CD4-positive, alpha-beta T cell (primary cell): ENCODE measurements at regions of chr15 and their contacts with region 1.

Region 1: GRCh38 chr15:80989518-80990478 is at the start of gene MESD:
- DNase-seq: peak; percentile 93 to 99 (median 98)
- ATAC-seq: peak; percentile 99
- H3K4me3 ChIP-seq: peak within 1 kb of the TSS; percentile 92
- H3K4me3 Mint-ChIP-seq: peak within 1 kb of the TSS; percentile 95
- H3K27ac ChIP-seq: peak within 1 kb of the TSS; percentile 79 to 83
- H3K27ac Mint-ChIP-seq: peak within 1 kb of the TSS; percentile 94
- H3K4me1 ChIP-seq: peaks cover 42% of the 10 kb centered on the region
- H3K4me1 Mint-ChIP-seq: peaks cover 68% of the 10 kb centered on the region
- H3K27me3 ChIP-seq: no peaks in the 10 kb centered on the region
- H3K27me3 Mint-ChIP-seq: no peaks in the 10 kb centered on the region
- CTCF ChIP-seq: no peak
- total RNA-seq, gene MESD: 8.4 to 10.2 TPM

Region 2: DNA sequence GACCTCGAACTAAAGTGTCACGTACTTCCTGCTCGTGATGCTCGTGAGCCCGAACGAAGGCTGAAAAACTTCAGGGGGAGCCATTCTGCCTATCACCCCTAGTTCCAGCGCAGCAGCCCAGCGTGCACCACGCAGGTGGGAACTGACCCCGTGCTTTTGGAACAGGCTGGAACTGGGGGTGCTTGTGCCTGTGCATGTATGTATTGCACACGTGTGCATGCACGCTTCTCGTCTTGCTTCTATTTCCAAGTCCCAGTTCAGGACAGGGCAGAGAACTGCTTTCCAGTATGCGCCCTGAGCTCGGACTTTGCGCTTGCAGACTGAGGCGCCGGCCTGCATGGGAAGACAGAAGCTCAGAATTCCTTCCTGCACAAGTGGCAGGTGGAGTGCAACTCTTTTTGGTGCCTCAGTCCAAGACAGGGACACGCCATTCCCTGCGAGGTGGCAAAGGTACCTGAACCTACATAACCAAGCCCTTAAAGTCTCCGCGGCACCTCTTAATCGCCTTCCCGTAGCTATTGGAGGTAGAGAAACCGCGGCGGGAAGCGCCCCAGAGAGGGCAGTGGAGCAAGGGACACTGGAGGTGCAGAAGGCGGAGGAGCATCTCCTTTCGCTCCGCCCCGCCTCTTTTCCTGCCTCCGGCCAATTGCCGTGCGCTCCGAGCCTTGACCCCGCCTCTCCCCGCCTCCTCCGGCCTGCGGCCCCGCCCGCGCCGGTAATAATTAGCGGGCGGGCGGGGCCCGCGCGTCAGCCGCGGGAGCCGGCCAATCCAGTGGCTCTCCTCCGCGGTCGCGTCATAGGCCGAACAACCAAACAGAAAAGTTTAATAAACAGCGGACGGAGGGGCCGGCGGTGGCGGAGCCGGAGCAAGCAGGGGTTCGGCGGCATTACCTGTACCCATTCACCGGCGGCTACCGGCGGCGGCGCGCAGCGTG is 930.7 kb before region 1 on chr15 and contains the start of gene ZFAND6:
- CTCF ChIA-PET with region 1: no interaction called
- POLR2A ChIA-PET with region 1: no interaction called
- intact Hi-C with region 1: loop called in 1 of 2 experiments (anchors 10 kb)
- DNase-seq: peak; percentile 88 to 98 (median 94)
- ATAC-seq: peak; percentile 89
- H3K4me3 ChIP-seq: peak within 1 kb of the TSS; percentile 78
- H3K4me3 Mint-ChIP-seq: peak within 1 kb of the TSS; percentile 98
- H3K27ac ChIP-seq: peak within 1 kb of the TSS; percentile 72 to 82
- H3K27ac Mint-ChIP-seq: peak within 1 kb of the TSS; percentile 95
- H3K4me1 ChIP-seq: peaks cover 13% of the 10 kb centered on the region
- H3K4me1 Mint-ChIP-seq: peaks cover 33% of the 10 kb centered on the region
- H3K27me3 ChIP-seq: no peaks in the 10 kb centered on the region
- H3K27me3 Mint-ChIP-seq: no peaks in the 10 kb centered on the region
- CTCF ChIP-seq: no peak
- total RNA-seq, gene ZFAND6: 65.5 to 69.2 TPM

Region 3: GRCh38 chr15:80152180-80152845 is 837.5 kb before region 1 on chr15:
- CTCF ChIA-PET with region 1: no interaction called
- POLR2A ChIA-PET with region 1: no interaction called
- intact Hi-C with region 1: loop called in 1 of 2 experiments (anchors 5 kb)
- DNase-seq: peak; percentile 79 to 98 (median 86)
- ATAC-seq: peak; percentile 72
- H3K4me3 ChIP-seq: peak overlapping the region; percentile 89
- H3K4me3 Mint-ChIP-seq: peak overlapping the region; percentile 89
- H3K27ac ChIP-seq: peak overlapping the region in 1 of 2 donors; percentile 47
- H3K27ac Mint-ChIP-seq: peak overlapping the region; percentile 74
- H3K4me1 ChIP-seq: peaks cover 21% of the 10 kb centered on the region
- H3K4me1 Mint-ChIP-seq: peaks cover 29% of the 10 kb centered on the region
- H3K27me3 ChIP-seq: no peaks in the 10 kb centered on the region
- H3K27me3 Mint-ChIP-seq: no peaks in the 10 kb centered on the region
- CTCF ChIP-seq: no peak

Region 4: GRCh38 chr15:80970018-80970658 is 19.7 kb before region 1 on chr15:
- CTCF ChIA-PET with region 1: interaction called, 10 read pairs
- POLR2A ChIA-PET with region 1: interaction called, 4 read pairs
- intact Hi-C with region 1: no loop called
- DNase-seq: peak; percentile 32 to 81 (median 48)
- ATAC-seq: peak; percentile 69
- H3K4me3 ChIP-seq: no peak overlapping the region
- H3K4me3 Mint-ChIP-seq: no peak overlapping the region
- H3K27ac ChIP-seq: no peak overlapping the region
- H3K27ac Mint-ChIP-seq: no peak overlapping the region
- H3K4me1 ChIP-seq: peaks cover 5% of the 10 kb centered on the region
- H3K4me1 Mint-ChIP-seq: peaks cover 19% of the 10 kb centered on the region
- H3K27me3 ChIP-seq: no peaks in the 10 kb centered on the region
- H3K27me3 Mint-ChIP-seq: no peaks in the 10 kb centered on the region
- CTCF ChIP-seq: peak; percentile 96

Region 5: GRCh38 chr15:81296673-81297072 is 306.9 kb after region 1 on chr15:
- CTCF ChIA-PET with region 1: no interaction called
- POLR2A ChIA-PET with region 1: no interaction called
- intact Hi-C with region 1: loop called in 1 of 2 experiments (anchors 10 kb)
- DNase-seq: peak; percentile 57 to 93 (median 73)
- ATAC-seq: peak; percentile 45
- H3K4me3 ChIP-seq: peak overlapping the region; percentile 96
- H3K4me3 Mint-ChIP-seq: peak overlapping the region; percentile 99
- H3K27ac ChIP-seq: peak overlapping the region; percentile 94 to 95
- H3K27ac Mint-ChIP-seq: peak overlapping the region; percentile 92
- H3K4me1 ChIP-seq: peaks cover 73% of the 10 kb centered on the region
- H3K4me1 Mint-ChIP-seq: peaks cover 68% of the 10 kb centered on the region
- H3K27me3 ChIP-seq: no peaks in the 10 kb centered on the region
- H3K27me3 Mint-ChIP-seq: no peaks in the 10 kb centered on the region
- CTCF ChIP-seq: no peak

Region 6: DNA sequence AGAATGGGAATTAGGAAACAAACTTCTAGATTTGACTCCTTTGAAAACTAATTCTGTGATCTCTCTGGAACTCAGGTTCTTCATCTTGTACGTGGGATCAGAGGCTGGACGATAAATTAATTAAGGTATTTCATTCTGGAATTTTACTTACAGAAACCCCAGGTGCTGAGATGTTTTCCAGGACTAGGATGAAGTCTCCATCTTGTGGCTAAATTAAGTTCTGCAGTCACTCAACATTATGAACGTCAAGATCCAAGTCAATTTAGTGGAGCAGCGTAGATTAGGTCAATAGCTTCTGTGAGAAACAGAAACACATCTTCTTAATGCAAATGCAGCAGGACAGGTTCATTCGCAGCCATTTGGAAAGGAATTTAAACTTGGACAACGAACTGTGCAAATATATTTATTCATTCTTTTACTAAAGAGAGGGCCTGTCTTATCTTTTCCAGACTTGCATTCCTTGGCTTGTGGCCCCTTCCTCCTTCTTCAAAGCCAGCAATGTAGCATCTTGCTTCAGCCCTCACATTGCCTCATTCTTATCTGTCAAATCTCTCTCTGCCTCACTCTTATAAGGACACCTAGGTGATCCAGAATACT is 410.9 kb after region 1 on chr15:
- CTCF ChIA-PET with region 1: no interaction called
- POLR2A ChIA-PET with region 1: no interaction called
- intact Hi-C with region 1: loop called in 1 of 2 experiments (anchors 10 kb)
- DNase-seq: peak in 4 of 14 experiments; percentile 5 to 77 (median 66)
- ATAC-seq: peak; percentile 41
- H3K4me3 ChIP-seq: no peak overlapping the region
- H3K4me3 Mint-ChIP-seq: no peak overlapping the region
- H3K27ac ChIP-seq: no peak overlapping the region
- H3K27ac Mint-ChIP-seq: no peak overlapping the region
- H3K4me1 ChIP-seq: no peaks in the 10 kb centered on the region
- H3K4me1 Mint-ChIP-seq: no peaks in the 10 kb centered on the region
- H3K27me3 ChIP-seq: no peaks in the 10 kb centered on the region
- H3K27me3 Mint-ChIP-seq: peaks cover 6% of the 10 kb centered on the region
- CTCF ChIP-seq: peak; percentile 81

Region 7: GRCh38 chr15:81548365-81549120 is 558.7 kb after region 1 on chr15:
- CTCF ChIA-PET with region 1: no interaction called
- POLR2A ChIA-PET with region 1: no interaction called
- intact Hi-C with region 1: no loop called
- DNase-seq: no peak
- ATAC-seq: no peak
- H3K4me3 ChIP-seq: no peak overlapping the region
- H3K4me3 Mint-ChIP-seq: no peak overlapping the region
- H3K27ac ChIP-seq: no peak overlapping the region
- H3K27ac Mint-ChIP-seq: no peak overlapping the region
- H3K4me1 ChIP-seq: no peaks in the 10 kb centered on the region
- H3K4me1 Mint-ChIP-seq: no peaks in the 10 kb centered on the region
- H3K27me3 ChIP-seq: no peaks in the 10 kb centered on the region
- H3K27me3 Mint-ChIP-seq: peaks cover 12% of the 10 kb centered on the region
- CTCF ChIP-seq: no peak